T-cell (primary cell): ENCODE measurements at regions of chr7 and their contacts with region 1.

Region 1: GRCh38 chr7:22576612-22577395 is 76.8 kb upstream of the STEAP1B start:
- DNase-seq: no peak
- ATAC-seq: no peak
- H3K4me3 ChIP-seq: no peak overlapping the region
- H3K4me3 Mint-ChIP-seq: no peak overlapping the region
- H3K27ac ChIP-seq: no peak overlapping the region
- H3K27ac Mint-ChIP-seq: no peak overlapping the region
- H3K4me1 ChIP-seq: no peaks in the 10 kb centered on the region
- H3K4me1 Mint-ChIP-seq: no peaks in the 10 kb centered on the region
- H3K27me3 ChIP-seq: peaks cover 0 to 8% of the 10 kb centered on the region in 2 experiments
- H3K27me3 Mint-ChIP-seq: peaks cover 9 to 31% of the 10 kb centered on the region in 2 donors

Region 2: DNA sequence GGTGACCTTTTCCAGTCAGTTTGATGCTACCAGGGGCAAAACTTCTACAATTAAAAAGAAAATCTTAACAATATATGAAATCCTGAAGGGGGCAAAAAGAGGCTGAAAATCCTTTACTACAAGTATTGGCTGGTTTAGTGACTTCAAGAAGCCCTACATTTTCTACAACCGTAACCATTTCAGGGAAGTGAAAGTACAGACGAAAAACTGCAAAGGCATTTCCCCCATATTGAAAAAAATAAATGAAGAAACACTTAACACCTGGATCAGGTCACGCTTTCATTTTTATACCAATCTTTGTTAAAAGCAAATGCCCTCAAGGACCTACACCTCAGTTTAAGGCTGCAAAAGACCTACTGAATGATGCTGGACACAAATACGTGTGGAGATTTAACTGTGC is 188.8 kb after region 1 on chr7:
- CTCF ChIA-PET with region 1: interaction called in 1 of 2 experiments, 12 read pairs
- POLR2A ChIA-PET with region 1: no interaction called
- DNase-seq: no peak
- ATAC-seq: no peak
- H3K4me3 ChIP-seq: no peak overlapping the region
- H3K4me3 Mint-ChIP-seq: no peak overlapping the region
- H3K27ac ChIP-seq: no peak overlapping the region
- H3K27ac Mint-ChIP-seq: no peak overlapping the region
- H3K4me1 ChIP-seq: no peaks in the 10 kb centered on the region
- H3K4me1 Mint-ChIP-seq: no peaks in the 10 kb centered on the region
- H3K27me3 ChIP-seq: peaks cover 0 to 9% of the 10 kb centered on the region in 2 experiments
- H3K27me3 Mint-ChIP-seq: peaks cover 29 to 36% of the 10 kb centered on the region in 2 donors